Mammary epithelial cell (primary cell): ENCODE measurements at regions of chr6 and their contacts with region 1.

Region 1: DNA sequence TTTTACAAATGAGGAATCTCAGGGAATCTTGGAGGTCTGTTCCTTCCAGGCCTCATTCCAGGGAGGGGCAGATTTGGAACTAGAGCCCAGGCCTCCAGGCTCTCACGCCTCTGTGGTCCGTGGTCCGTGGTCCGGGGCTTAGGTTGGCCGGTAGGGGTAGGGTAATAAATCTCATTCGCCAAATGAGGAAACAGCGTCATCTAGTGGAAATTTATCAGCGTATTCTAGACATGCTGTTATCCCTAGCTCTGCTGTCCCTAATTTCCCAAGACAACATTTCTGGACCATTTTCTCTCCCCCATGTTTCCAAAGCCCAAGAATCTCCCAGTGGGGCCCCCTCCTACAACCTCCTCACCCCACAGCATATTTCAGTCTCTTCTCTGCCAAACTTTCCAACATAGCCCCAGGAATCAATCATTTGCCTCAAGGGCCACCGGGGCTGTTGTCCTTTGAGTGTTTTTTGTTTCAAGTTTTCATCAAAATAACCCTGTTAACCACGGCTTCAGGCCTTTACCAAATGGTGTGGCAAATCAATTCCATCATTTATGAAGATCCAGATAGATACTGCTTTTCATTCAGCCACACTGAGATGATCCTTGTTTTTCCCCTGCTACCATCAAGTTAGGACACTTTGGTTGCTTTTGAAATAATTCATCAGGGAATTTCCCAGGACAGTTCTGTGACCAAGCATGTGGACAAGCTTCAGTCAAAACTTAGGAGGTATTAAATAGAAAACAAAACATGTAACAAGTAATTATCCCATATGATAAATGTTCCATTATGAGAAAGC is 126.8 kb downstream of the ALDH8A1 start:
- DNase-seq: peak; percentile 72
- H3K4me3 ChIP-seq: no peak overlapping the region
- H3K27ac ChIP-seq: no peak overlapping the region
- H3K4me1 ChIP-seq: peaks cover 7% of the 10 kb centered on the region
- H3K27me3 ChIP-seq: no peaks in the 10 kb centered on the region
- CTCF ChIP-seq: peak; percentile 94 to 95

Region 2: DNA sequence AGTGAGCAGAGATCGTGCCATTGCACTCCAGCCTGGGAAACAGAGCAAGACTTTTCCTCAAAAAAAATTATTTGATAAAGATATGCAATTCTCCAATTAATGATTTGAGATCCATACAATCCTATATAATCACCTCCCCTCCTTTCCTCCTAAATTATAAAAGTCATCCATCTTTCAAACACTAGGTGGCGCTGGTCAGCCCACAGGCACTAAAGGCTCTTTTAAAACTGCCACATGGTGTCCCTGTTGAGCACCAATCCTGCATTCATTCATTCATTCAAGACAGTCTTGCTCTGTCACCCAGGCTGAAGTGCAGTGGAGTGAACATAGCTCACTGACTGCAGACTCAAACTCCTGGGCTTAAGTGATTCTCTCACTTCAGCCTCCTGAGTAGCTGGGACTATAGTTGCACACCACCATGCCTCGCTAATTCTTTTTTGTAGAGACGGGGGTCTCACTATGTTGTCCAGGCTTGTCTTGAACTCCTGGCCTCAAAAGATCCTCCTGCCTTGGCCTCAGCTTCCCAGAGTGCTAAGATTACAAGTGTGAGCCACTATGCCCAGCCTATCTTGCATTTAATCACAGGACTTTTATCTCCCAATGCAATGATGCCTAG is 711.9 kb before region 1 on chr6:
- CTCF ChIA-PET with region 1: interaction called, 3 read pairs
- dilution Hi-C with region 1: no loop called
- in situ Hi-C with region 1: no loop called
- intact Hi-C with region 1: loop called (anchors 1 kb)
- DNase-seq: peak; percentile 52
- H3K4me3 ChIP-seq: no peak overlapping the region
- H3K27ac ChIP-seq: no peak overlapping the region
- H3K4me1 ChIP-seq: no peaks in the 10 kb centered on the region
- H3K27me3 ChIP-seq: no peaks in the 10 kb centered on the region
- CTCF ChIP-seq: peak; percentile 96 to 97

Region 3: GRCh38 chr6:134174672-134175198 is 648.4 kb before region 1 on chr6:
- CTCF ChIA-PET with region 1: interaction called, 7 read pairs
- dilution Hi-C with region 1: loop called (anchors 5 kb)
- in situ Hi-C with region 1: loop called in 1 of 2 experiments (anchors 5 kb)
- intact Hi-C with region 1: loop called (anchors 1 kb)
- DNase-seq: peak; percentile 90
- H3K4me3 ChIP-seq: peak overlapping the region; percentile 52 to 99 (median 97)
- H3K27ac ChIP-seq: peak overlapping the region; percentile 94
- H3K4me1 ChIP-seq: peaks cover 43% of the 10 kb centered on the region
- H3K27me3 ChIP-seq: no peaks in the 10 kb centered on the region
- CTCF ChIP-seq: peak in 1 of 2 donors; percentile 8

Region 4: DNA sequence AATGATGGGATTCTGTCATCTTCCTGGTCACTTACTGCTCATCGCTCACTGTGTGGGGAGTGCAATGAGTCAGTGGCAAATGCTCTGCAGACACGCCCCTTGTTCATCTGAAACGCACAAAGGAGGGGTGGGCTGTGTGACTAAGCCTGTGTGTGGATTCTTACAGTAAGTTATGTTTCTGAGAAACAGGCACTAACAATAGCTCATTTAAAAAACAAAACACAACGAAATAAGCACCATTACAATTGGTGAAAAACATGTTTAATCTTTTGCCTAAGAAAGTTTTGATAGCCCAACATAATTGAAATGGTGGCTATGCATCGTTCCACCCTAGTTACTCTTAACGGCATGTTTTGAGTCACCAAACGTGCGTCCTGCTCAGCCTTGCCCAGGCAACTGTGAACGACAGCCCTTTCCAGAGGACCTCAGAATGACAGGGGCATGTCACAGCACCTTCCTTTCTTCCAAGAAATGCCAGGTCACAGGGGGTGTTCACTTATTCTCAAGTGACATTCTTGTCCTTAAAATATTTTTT is 386.8 kb before region 1 on chr6:
- CTCF ChIA-PET with region 1: no interaction called
- dilution Hi-C with region 1: no loop called
- in situ Hi-C with region 1: loop called in 1 of 2 experiments (anchors 25 kb)
- intact Hi-C with region 1: loop called (anchors 5 kb)
- DNase-seq: peak; percentile 97
- H3K4me3 ChIP-seq: peak overlapping the region in 1 of 3 experiments; percentile 8
- H3K27ac ChIP-seq: peak overlapping the region; percentile 98
- H3K4me1 ChIP-seq: peaks cover 33% of the 10 kb centered on the region
- H3K27me3 ChIP-seq: no peaks in the 10 kb centered on the region
- CTCF ChIP-seq: no peak

Region 5: GRCh38 chr6:134674514-134674913 is 148.6 kb before region 1 on chr6:
- CTCF ChIA-PET with region 1: no interaction called
- dilution Hi-C with region 1: loop called (anchors 5 kb)
- in situ Hi-C with region 1: no loop called
- intact Hi-C with region 1: no loop called
- DNase-seq: no peak
- H3K4me3 ChIP-seq: no peak overlapping the region
- H3K27ac ChIP-seq: no peak overlapping the region
- H3K4me1 ChIP-seq: peaks cover 17% of the 10 kb centered on the region
- H3K27me3 ChIP-seq: no peaks in the 10 kb centered on the region
- CTCF ChIP-seq: no peak

Region 6: DNA sequence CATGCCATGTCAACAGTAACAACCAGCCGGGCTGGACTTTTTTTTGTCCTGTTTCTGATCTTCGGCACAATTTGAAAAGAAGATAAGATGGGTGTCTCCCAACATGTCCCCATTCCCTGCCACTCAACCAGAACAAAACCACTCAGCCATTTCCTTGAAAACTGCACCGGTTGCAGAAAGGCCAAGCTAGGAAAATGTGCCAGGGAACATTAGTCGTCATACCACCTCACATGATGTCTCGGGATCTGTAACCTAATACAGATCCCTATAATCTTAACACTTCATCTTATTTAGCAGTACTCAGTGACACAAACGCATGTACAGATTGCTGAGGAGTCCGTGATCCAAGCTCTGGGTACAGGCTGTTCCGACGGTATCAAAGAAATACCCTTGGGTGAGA is 80.3 kb after region 1 on chr6:
- CTCF ChIA-PET with region 1: no interaction called
- dilution Hi-C with region 1: no loop called
- in situ Hi-C with region 1: no loop called
- intact Hi-C with region 1: no loop called
- DNase-seq: no peak
- H3K4me3 ChIP-seq: no peak overlapping the region
- H3K27ac ChIP-seq: no peak overlapping the region
- H3K4me1 ChIP-seq: peaks cover 5% of the 10 kb centered on the region
- H3K27me3 ChIP-seq: no peaks in the 10 kb centered on the region
- CTCF ChIP-seq: no peak

Region 7: GRCh38 chr6:134938896-134939295 is 115.8 kb after region 1 on chr6:
- CTCF ChIA-PET with region 1: interaction called, 30 read pairs
- dilution Hi-C with region 1: no loop called
- in situ Hi-C with region 1: loop called (anchors 10 to 25 kb)
- intact Hi-C with region 1: loop called (anchors 1 kb)
- DNase-seq: no peak
- H3K4me3 ChIP-seq: no peak overlapping the region
- H3K27ac ChIP-seq: no peak overlapping the region
- H3K4me1 ChIP-seq: peaks cover 13% of the 10 kb centered on the region
- H3K27me3 ChIP-seq: no peaks in the 10 kb centered on the region
- CTCF ChIP-seq: no peak